ENCODE measurements at regions of chr20 and their contacts with region 1.

Region 1: GRCh38 chr20:45322952-45323383 is 14.9 kb upstream of the MATN4 start:
- DNase-seq: peak in 1 of 2 donors; percentile 72
- H3K4me3 ChIP-seq: no peak overlapping the region
- H3K27ac ChIP-seq: no peak overlapping the region
- H3K4me1 ChIP-seq: no peaks in the 10 kb centered on the region
- H3K27me3 ChIP-seq: no peaks in the 10 kb centered on the region
- CTCF ChIP-seq: peak in 2 of 3 donors; percentile 23 to 41
- POLR2A ChIP-seq: no peak

Region 2: GRCh38 chr20:45163083-45163803 is 159.7 kb before region 1 on chr20:
- intact Hi-C with region 1: no loop called
- DNase-seq: no peak
- H3K4me3 ChIP-seq: no peak overlapping the region
- H3K27ac ChIP-seq: no peak overlapping the region
- H3K4me1 ChIP-seq: no peaks in the 10 kb centered on the region
- H3K27me3 ChIP-seq: no peaks in the 10 kb centered on the region
- CTCF ChIP-seq: no peak
- POLR2A ChIP-seq: no peak

Region 3: GRCh38 chr20:45283548-45284057 is 39.4 kb before region 1 on chr20:
- intact Hi-C with region 1: no loop called
- DNase-seq: no peak
- H3K4me3 ChIP-seq: no peak overlapping the region
- H3K27ac ChIP-seq: no peak overlapping the region
- H3K4me1 ChIP-seq: no peaks in the 10 kb centered on the region
- H3K27me3 ChIP-seq: no peaks in the 10 kb centered on the region
- CTCF ChIP-seq: no peak
- POLR2A ChIP-seq: no peak

Region 4: GRCh38 chr20:45445805-45446562 is 123.0 kb after region 1 on chr20:
- intact Hi-C with region 1: loop called (anchors 5 kb)
- DNase-seq: no peak
- H3K4me3 ChIP-seq: no peak overlapping the region
- H3K27ac ChIP-seq: no peak overlapping the region
- H3K4me1 ChIP-seq: no peaks in the 10 kb centered on the region
- H3K27me3 ChIP-seq: no peaks in the 10 kb centered on the region
- CTCF ChIP-seq: peak in 1 of 3 donors; percentile 16
- POLR2A ChIP-seq: no peak

Measured in breast epithelium (tissue), 4 donors.